ENCODE measurements at regions of chr7 and their contacts with region 1.

Region 1: DNA sequence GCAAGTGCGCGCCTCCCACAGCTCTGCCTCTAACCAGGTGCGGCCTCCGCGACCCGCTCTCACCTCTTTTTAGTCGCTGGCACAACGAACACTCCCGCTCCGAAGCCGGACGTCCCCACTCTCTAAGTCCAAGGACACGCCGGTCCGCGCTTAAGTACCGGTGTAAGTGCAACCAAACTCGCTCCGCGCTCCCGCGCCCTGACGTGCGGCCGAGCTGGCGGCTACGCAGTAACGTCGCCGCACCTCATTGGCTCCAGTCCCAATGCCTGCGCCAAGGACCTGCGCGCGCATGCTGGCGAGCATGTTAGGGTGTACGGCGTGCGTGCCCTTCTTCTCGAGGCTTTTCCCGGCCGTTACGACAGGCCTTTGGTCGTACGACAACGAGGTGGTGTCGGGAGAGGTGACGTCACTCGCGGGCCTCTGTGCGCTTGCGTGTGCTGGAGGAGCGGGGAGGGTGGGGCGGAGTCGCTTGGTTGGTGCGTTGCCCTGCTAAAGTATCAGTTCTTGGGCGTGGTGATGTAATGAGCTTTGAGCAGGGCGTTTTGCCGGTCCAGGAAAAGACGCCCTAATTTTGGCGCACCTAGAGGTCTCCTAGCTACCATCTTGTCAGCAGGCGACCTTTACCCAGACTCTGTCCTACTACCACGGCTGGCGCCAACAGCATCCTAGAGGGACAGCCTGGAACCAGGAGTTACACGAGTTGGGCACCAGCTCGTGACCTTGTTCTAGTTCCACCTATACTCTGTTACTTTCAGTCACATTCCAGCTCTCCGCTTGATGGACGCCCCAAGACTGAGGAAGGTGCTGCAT is at the start of gene CYCS:
- DNase-seq: peak; percentile 100
- H3K4me3 Mint-ChIP-seq: peak within 1 kb of the TSS; percentile 96
- H3K27ac Mint-ChIP-seq: peak within 1 kb of the TSS; percentile 95
- H3K4me1 Mint-ChIP-seq: peaks cover 31% of the 10 kb centered on the region
- H3K27me3 Mint-ChIP-seq: no peaks in the 10 kb centered on the region
- total RNA-seq, gene CYCS: 280 and 290 TPM in 2 replicates

Region 2: GRCh38 chr7:23298885-23299769 is 1826.2 kb before region 1 on chr7 and contains the start of gene MALSU1:
- intact Hi-C with region 1: loop called (anchors 5 kb)
- DNase-seq: peak; percentile 99
- H3K4me3 Mint-ChIP-seq: peak within 1 kb of the TSS; percentile 93
- H3K27ac Mint-ChIP-seq: peak within 1 kb of the TSS; percentile 90
- H3K4me1 Mint-ChIP-seq: peaks cover 28% of the 10 kb centered on the region
- H3K27me3 Mint-ChIP-seq: no peaks in the 10 kb centered on the region
- total RNA-seq, gene MALSU1: 92.8 and 98.8 TPM in 2 replicates

Region 3: DNA sequence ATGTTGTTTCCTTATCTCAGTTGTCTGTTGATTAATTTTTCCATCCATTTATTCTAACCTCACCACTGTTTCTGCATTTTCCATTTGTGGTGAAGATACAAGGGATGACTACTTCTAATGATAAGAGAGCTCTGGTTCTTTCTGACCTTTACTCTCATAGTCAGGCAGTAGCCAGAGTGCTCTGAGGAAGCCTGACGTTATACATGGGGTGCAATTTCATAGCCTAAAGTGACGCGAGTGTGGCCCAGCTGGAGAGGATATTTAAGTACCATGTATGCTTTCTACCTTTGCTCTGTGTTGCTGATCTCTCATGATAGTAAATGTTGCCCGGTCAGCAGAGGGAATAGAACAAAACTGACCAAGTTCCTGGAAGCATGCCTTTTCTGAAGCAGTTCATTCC is 33.6 kb after region 1 on chr7:
- intact Hi-C with region 1: loop called (anchors 2 kb)
- DNase-seq: peak; percentile 39
- H3K4me3 Mint-ChIP-seq: no peak overlapping the region
- H3K27ac Mint-ChIP-seq: no peak overlapping the region
- H3K4me1 Mint-ChIP-seq: peaks cover 4% of the 10 kb centered on the region
- H3K27me3 Mint-ChIP-seq: no peaks in the 10 kb centered on the region

Region 4: DNA sequence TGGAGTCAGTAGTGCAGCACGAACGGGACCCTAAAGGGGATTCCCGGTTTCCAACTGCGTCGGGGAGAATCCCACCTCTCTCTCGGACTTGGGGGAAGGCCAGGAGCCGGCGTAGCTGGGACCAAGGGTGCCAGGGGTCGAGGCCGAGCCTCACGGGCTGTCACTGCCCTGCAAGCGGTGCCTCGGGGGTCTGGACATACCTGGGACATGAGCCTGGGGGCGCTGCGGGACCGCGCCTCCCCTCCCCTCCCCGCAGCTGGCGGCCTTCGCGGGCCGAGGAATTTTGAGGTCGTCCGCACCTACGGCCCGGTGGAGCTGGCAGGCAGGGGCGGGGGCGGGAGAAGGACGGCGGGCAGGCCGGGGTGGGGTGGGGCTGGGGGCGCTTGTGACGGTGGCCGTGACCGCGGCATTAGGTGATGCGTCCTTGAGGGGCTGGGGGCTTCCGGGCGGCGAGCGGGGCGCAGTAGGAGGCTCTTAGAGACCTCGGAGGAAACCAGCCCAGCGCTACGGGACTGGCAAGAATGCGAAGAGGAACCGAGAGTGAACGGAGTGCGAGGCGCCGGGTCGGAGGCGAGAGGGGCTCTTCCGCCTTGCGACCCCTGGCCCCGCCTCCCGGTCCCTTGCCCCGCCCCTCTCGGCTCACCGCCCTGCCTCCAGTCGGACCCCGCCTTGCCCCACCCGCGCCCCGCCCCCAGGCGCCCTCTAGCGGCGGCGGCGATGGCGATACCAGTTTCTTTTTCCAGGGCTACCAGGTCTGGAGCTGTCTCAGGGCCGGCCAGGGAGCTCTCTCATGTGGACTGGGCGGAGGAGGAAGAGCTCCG is 54.6 kb after region 1 on chr7:
- intact Hi-C with region 1: loop called (anchors 1 kb)
- DNase-seq: peak; percentile 99
- H3K4me3 Mint-ChIP-seq: peak overlapping the region; percentile 84
- H3K27ac Mint-ChIP-seq: peak overlapping the region; percentile 85
- H3K4me1 Mint-ChIP-seq: peaks cover 14% of the 10 kb centered on the region
- H3K27me3 Mint-ChIP-seq: peaks cover 9% of the 10 kb centered on the region

Measured in activated CD4-positive, alpha-beta T cell treated with anti-CD3 and anti-CD28 coated beads, Interleukin-2, amount 10 ng/mL, durations not matched to agents 24 days and 14 days (primary cell).